CD4-positive, alpha-beta memory T cell (primary cell): ENCODE measurements at regions of chr19 and their contacts with region 1.

Region 1: GRCh38 chr19:41859618-41860418 is at the start of gene RPS19:
- DNase-seq: peak; percentile 97 to 99 (median 98)
- H3K4me3 ChIP-seq: peak within 1 kb of the TSS; percentile 82 to 86
- H3K4me3 Mint-ChIP-seq: peak within 1 kb of the TSS; percentile 89 to 98 (median 94)
- H3K27ac ChIP-seq: peak within 1 kb of the TSS; percentile 96
- H3K27ac Mint-ChIP-seq: peak within 1 kb of the TSS; percentile 91 to 100 (median 98)
- H3K4me1 ChIP-seq: peaks cover 50% of the 10 kb centered on the region
- H3K4me1 Mint-ChIP-seq: peaks cover 34 to 56% (median 42%) of the 10 kb centered on the region in 4 donors
- H3K27me3 ChIP-seq: no peaks in the 10 kb centered on the region
- H3K27me3 Mint-ChIP-seq: no peaks in the 10 kb centered on the region
- total RNA-seq, gene RPS19: 3,807 to 4,015 TPM

Region 2: DNA sequence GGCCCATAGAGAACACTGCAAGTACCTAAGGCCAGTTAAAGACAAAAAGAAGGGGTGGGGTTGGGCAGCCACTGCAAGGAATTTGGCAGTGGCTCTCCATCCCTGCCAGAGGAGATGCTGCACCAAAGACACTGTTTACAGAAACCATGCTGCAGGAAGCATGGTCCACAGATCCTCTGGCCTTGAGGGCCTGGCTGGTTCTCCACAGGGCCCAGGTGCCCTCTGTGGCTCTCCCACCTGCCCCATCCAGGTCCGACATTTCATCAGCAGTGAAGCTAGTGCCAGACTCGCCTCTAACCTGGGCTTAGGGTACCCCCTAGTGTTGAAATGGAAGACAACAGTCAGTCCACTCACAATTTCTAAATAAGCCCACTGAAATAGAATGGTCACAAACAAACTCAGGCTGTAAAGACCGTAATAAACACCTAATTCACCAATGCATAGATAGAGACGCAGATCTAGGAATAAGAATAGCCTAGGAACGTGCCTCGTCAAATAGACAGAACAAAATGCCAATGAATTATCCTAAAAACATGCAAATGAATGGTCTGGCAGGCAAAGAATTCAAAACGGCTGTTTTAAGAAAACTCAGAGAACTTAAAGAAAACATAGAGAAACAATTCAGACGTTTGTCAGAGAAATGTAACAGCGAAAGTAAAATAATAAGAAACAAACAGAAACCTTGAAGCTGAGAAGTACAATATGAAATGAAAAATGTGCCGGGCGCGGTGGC is 38.6 kb before region 1 on chr19:
- CTCF ChIA-PET with region 1: no interaction called
- POLR2A ChIA-PET with region 1: no interaction called
- intact Hi-C with region 1: no loop called
- DNase-seq: peak in 4 of 5 donors; percentile 45 to 59 (median 54)
- H3K4me3 ChIP-seq: no peak overlapping the region
- H3K4me3 Mint-ChIP-seq: no peak overlapping the region
- H3K27ac ChIP-seq: no peak overlapping the region
- H3K27ac Mint-ChIP-seq: peak overlapping the region in 1 of 7 donors; percentile 21
- H3K4me1 ChIP-seq: no peaks in the 10 kb centered on the region
- H3K4me1 Mint-ChIP-seq: peaks cover 0 to 3% (median 0%) of the 10 kb centered on the region in 4 donors
- H3K27me3 ChIP-seq: peaks cover 8% of the 10 kb centered on the region
- H3K27me3 Mint-ChIP-seq: peaks cover 8 to 14% of the 10 kb centered on the region in 2 donors

Region 3: DNA sequence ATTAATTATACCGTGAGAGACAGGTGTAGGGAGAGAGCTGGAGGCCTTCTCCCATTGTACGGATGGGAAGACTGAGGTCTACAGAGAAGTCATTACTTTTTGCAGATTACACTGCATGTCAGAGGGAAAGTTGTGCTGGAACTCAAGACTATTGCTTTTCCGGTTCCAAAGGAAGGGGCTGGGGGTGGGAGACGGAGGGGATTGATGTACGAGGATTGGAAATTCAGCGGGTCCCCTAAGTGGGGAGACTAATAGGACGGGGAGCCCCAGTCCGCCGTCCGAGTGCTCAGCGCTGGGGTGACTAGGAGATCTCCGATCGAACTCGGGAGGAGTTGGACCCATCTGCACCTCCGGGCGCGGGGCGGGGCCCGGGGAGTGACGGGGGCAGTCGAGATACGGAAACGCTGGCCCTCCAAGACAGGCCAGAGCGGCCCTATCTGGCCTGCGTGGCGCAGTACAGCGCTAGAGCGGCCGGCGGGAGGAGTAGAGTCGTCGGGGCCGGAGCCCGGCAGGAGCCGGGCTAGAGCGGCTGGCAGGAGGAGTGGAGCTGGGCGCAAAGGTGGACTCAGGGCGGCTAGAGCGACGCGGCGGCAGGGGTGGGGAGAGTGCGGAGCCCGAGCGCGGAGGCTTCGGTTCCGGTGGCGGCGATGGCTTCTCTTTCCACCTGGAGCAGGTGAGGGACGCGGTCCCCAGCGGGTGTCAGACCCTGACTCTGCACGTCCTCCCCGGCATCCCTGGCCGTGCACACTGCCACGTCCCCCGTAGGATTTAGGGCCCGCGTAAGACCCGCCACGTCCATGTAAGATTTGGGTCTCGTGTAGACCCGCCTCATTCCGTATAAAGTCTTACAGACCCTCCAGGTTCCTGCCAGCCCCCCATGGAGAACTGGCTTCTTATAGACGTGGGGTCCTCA is 24.3 kb after region 1 on chr19:
- CTCF ChIA-PET with region 1: interaction called, 44 read pairs
- POLR2A ChIA-PET with region 1: interaction called, 246 read pairs
- intact Hi-C with region 1: loop called (anchors 1 kb)
- DNase-seq: peak; percentile 82 to 86 (median 83)
- H3K4me3 ChIP-seq: peak overlapping the region; percentile 45 to 94
- H3K4me3 Mint-ChIP-seq: peak overlapping the region; percentile 86 to 99 (median 96)
- H3K27ac ChIP-seq: peak overlapping the region; percentile 82
- H3K27ac Mint-ChIP-seq: peak overlapping the region; percentile 90 to 99 (median 96)
- H3K4me1 ChIP-seq: peaks cover 71% of the 10 kb centered on the region
- H3K4me1 Mint-ChIP-seq: peaks cover 36 to 90% (median 57%) of the 10 kb centered on the region in 4 donors
- H3K27me3 ChIP-seq: no peaks in the 10 kb centered on the region
- H3K27me3 Mint-ChIP-seq: no peaks in the 10 kb centered on the region

Region 4: GRCh38 chr19:41904118-41904870 is 44.5 kb after region 1 on chr19:
- CTCF ChIA-PET with region 1: no interaction called
- POLR2A ChIA-PET with region 1: interaction called, 16 read pairs
- intact Hi-C with region 1: no loop called
- DNase-seq: no peak
- H3K4me3 ChIP-seq: no peak overlapping the region
- H3K4me3 Mint-ChIP-seq: peak overlapping the region in 1 of 8 donors; percentile 55
- H3K27ac ChIP-seq: no peak overlapping the region
- H3K27ac Mint-ChIP-seq: peak overlapping the region in 2 of 7 donors; percentile 46 to 66
- H3K4me1 ChIP-seq: peaks cover 33% of the 10 kb centered on the region
- H3K4me1 Mint-ChIP-seq: peaks cover 19 to 37% (median 26%) of the 10 kb centered on the region in 4 donors
- H3K27me3 ChIP-seq: no peaks in the 10 kb centered on the region
- H3K27me3 Mint-ChIP-seq: no peaks in the 10 kb centered on the region

Region 5: DNA sequence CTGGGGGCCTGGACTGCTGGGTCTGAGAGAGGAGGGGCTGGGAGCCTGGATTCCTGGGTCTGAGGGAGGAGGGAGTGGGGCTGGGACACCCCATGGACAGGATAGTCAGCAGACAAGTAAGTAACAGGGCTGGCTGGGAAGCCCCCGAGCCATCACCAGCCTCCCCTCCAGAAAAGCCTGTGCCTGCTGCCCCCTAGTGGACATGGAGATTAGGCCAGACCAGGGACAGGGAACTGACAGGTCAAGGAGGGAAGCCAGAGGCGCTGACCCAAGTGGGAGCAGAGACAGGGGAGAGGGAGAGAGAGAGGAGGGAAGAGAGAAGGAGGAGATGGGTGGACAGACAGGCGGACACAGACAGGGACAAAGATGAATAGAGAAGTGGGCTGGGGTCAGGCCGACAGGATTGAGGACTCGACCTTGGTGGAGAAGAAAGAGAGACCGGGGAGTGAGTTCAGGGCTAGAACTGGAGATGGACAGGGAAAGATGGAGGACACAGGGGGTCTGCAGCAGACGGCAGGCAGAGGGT is 75.1 kb after region 1 on chr19:
- CTCF ChIA-PET with region 1: interaction called, 10 read pairs
- POLR2A ChIA-PET with region 1: interaction called, 9 read pairs
- intact Hi-C with region 1: loop called (anchors 1 kb)
- DNase-seq: peak; percentile 65 to 82 (median 70)
- H3K4me3 ChIP-seq: no peak overlapping the region
- H3K4me3 Mint-ChIP-seq: peak overlapping the region in 2 of 8 donors; percentile 51 to 64
- H3K27ac ChIP-seq: no peak overlapping the region
- H3K27ac Mint-ChIP-seq: peak overlapping the region; percentile 38 to 95 (median 89)
- H3K4me1 ChIP-seq: peaks cover 37% of the 10 kb centered on the region
- H3K4me1 Mint-ChIP-seq: peaks cover 25 to 61% (median 40%) of the 10 kb centered on the region in 4 donors
- H3K27me3 ChIP-seq: no peaks in the 10 kb centered on the region
- H3K27me3 Mint-ChIP-seq: peaks cover 1 to 6% of the 10 kb centered on the region in 2 donors

Region 6: GRCh38 chr19:41945135-41945766 is 85.4 kb after region 1 on chr19:
- CTCF ChIA-PET with region 1: interaction called, 85 read pairs
- POLR2A ChIA-PET with region 1: interaction called, 56 read pairs
- intact Hi-C with region 1: no loop called
- DNase-seq: peak; percentile 88 to 99 (median 90)
- H3K4me3 ChIP-seq: no peak overlapping the region
- H3K4me3 Mint-ChIP-seq: peak overlapping the region; percentile 59 to 86 (median 68)
- H3K27ac ChIP-seq: peak overlapping the region; percentile 41
- H3K27ac Mint-ChIP-seq: peak overlapping the region; percentile 95 to 100 (median 99)
- H3K4me1 ChIP-seq: peaks cover 38% of the 10 kb centered on the region
- H3K4me1 Mint-ChIP-seq: peaks cover 23 to 63% (median 38%) of the 10 kb centered on the region in 4 donors
- H3K27me3 ChIP-seq: no peaks in the 10 kb centered on the region
- H3K27me3 Mint-ChIP-seq: peaks cover 0 to 2% of the 10 kb centered on the region in 2 donors

Region 7: GRCh38 chr19:41959056-41960053 is 99.5 kb after region 1 on chr19 and contains the start of gene RABAC1:
- CTCF ChIA-PET with region 1: interaction called, 17 read pairs
- POLR2A ChIA-PET with region 1: interaction called, 57 read pairs
- intact Hi-C with region 1: loop called (anchors 1 kb)
- DNase-seq: peak; percentile 83 to 93 (median 85)
- H3K4me3 ChIP-seq: peak within 1 kb of the TSS; percentile 73 to 85
- H3K4me3 Mint-ChIP-seq: peak within 1 kb of the TSS; percentile 90 to 97 (median 96)
- H3K27ac ChIP-seq: peak within 1 kb of the TSS; percentile 77
- H3K27ac Mint-ChIP-seq: peak within 1 kb of the TSS; percentile 82 to 99 (median 96)
- H3K4me1 ChIP-seq: peaks cover 16% of the 10 kb centered on the region
- H3K4me1 Mint-ChIP-seq: peaks cover 10 to 26% (median 17%) of the 10 kb centered on the region in 4 donors
- H3K27me3 ChIP-seq: no peaks in the 10 kb centered on the region
- H3K27me3 Mint-ChIP-seq: no peaks in the 10 kb centered on the region
- total RNA-seq, gene RABAC1: 97.4 to 100 TPM

Region 8: GRCh38 chr19:42010245-42011126 is 150.7 kb after region 1 on chr19:
- CTCF ChIA-PET with region 1: no interaction called
- POLR2A ChIA-PET with region 1: no interaction called
- intact Hi-C with region 1: no loop called
- DNase-seq: no peak
- H3K4me3 ChIP-seq: no peak overlapping the region
- H3K4me3 Mint-ChIP-seq: no peak overlapping the region
- H3K27ac ChIP-seq: no peak overlapping the region
- H3K27ac Mint-ChIP-seq: no peak overlapping the region
- H3K4me1 ChIP-seq: no peaks in the 10 kb centered on the region
- H3K4me1 Mint-ChIP-seq: no peaks in the 10 kb centered on the region
- H3K27me3 ChIP-seq: no peaks in the 10 kb centered on the region
- H3K27me3 Mint-ChIP-seq: peaks cover 4 to 5% of the 10 kb centered on the region in 2 donors

Region 9: GRCh38 chr19:42075616-42076379 is 216.0 kb after region 1 on chr19 and contains the start of gene ZNF574:
- CTCF ChIA-PET with region 1: no interaction called
- POLR2A ChIA-PET with region 1: interaction called, 3 read pairs
- intact Hi-C with region 1: loop called (anchors 5 kb)
- DNase-seq: peak; percentile 96 to 99 (median 99)
- H3K4me3 ChIP-seq: peak within 1 kb of the TSS; percentile 66 to 86
- H3K4me3 Mint-ChIP-seq: peak within 1 kb of the TSS; percentile 92 to 100 (median 98)
- H3K27ac ChIP-seq: peak within 1 kb of the TSS; percentile 95
- H3K27ac Mint-ChIP-seq: peak within 1 kb of the TSS; percentile 97 to 100 (median 100)
- H3K4me1 ChIP-seq: peaks cover 24% of the 10 kb centered on the region
- H3K4me1 Mint-ChIP-seq: peaks cover 29 to 38% (median 34%) of the 10 kb centered on the region in 4 donors
- H3K27me3 ChIP-seq: no peaks in the 10 kb centered on the region
- H3K27me3 Mint-ChIP-seq: no peaks in the 10 kb centered on the region
- total RNA-seq, gene ZNF574: 25.1 to 26.0 TPM